ENCODE measurements at regions of chr15 and their contacts with region 1.

Region 1: DNA sequence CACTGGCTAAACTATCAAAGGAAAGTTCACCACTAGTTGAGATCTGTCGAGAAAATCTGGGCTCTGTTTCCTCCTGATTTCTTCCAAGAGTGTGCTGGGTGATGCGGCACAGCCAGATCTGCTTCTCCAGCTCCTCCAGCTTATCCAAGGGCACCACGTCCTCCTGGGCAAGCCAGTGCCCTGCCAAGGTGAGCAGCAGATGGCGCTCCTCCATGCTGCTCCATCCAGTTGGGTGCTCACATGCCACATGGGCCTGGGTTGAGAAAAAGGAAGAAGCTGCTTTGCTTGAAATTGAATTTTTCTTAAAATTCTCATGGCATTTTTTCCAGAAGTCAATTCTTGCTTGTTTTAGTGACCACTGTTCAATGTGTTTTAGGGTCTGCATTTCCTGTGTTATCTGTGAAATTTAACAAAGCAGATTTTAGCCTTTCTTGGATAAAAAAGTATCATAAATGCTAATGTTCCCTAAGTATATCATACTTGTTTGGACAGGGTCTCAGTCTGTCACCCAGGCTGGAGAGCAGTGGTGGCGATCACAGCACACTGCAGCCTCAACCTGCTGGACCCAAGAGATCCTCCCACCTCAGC is 47.3 kb downstream of the EIF3J start:
- DNase-seq: peak; percentile 39 to 54
- H3K4me3 ChIP-seq: no peak overlapping the region
- H3K27ac ChIP-seq: no peak overlapping the region
- H3K4me1 ChIP-seq: peaks cover 11% of the 10 kb centered on the region; the same call in 1 of the 2 replicates
- H3K27me3 ChIP-seq: no peaks in the 10 kb centered on the region
- CTCF ChIP-seq: peak; percentile 51

Region 2: DNA sequence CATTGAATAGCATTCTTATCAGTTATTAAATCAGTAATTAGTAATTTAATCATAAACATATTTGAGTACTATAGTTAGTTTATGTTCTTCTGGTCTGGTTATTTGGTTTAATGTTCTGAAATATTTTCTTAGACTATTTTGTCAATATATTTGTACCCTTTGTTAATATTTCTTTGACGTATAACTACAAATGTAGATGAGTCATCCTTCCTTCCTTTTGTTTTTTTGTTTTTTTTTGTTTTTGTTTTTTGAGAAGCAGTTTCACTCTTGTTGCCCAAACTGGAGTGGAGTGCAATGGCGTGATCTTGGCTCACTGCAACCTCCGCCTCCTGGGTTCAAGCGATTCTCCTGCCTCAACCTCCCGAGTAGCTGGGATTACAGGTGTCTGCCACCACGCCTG is 64.7 kb before region 1 on chr15:
- CTCF ChIA-PET with region 1: no interaction called
- POLR2A ChIA-PET with region 1: no interaction called
- intact Hi-C with region 1: no loop called
- DNase-seq: no peak
- H3K4me3 ChIP-seq: no peak overlapping the region
- H3K27ac ChIP-seq: no peak overlapping the region
- H3K4me1 ChIP-seq: no peaks in the 10 kb centered on the region
- H3K27me3 ChIP-seq: no peaks in the 10 kb centered on the region
- CTCF ChIP-seq: no peak

Region 3: DNA sequence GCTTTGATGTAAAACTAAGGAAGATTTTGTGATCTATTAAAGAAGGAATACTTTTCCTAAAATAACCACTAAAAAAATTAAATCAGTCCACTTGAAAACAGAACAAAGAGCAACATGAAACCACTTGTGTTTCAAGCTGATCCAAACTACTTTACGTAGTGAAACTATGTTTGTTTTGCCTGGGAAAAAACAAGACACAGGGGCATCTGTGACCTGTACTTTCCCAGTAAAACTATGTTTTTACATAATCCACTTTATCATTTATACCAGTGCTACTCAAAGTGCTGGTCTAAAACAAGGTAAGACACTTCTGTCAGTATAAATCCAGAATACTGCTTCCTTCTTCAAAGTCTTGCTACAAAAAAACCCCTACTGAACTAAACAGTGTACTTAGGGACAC is 22.5 kb after region 1 on chr15:
- CTCF ChIA-PET with region 1: interaction called, 13 read pairs
- POLR2A ChIA-PET with region 1: no interaction called
- intact Hi-C with region 1: no loop called
- DNase-seq: no peak
- H3K4me3 ChIP-seq: no peak overlapping the region
- H3K27ac ChIP-seq: no peak overlapping the region
- H3K4me1 ChIP-seq: no peaks in the 10 kb centered on the region
- H3K27me3 ChIP-seq: no peaks in the 10 kb centered on the region
- CTCF ChIP-seq: no peak

Region 4: GRCh38 chr15:44788748-44789147 is 204.5 kb after region 1 on chr15:
- CTCF ChIA-PET with region 1: interaction called, 15 read pairs
- POLR2A ChIA-PET with region 1: no interaction called
- intact Hi-C with region 1: no loop called
- DNase-seq: no peak
- H3K4me3 ChIP-seq: no peak overlapping the region
- H3K27ac ChIP-seq: no peak overlapping the region
- H3K4me1 ChIP-seq: 0 out of 2 replicates have a peak, but pooled peaks cover 4% of the 10 kb centered on the region
- H3K27me3 ChIP-seq: no peaks in the 10 kb centered on the region
- CTCF ChIP-seq: no peak

Region 5: GRCh38 chr15:44918136-44918535 is 333.9 kb after region 1 on chr15:
- CTCF ChIA-PET with region 1: no interaction called
- POLR2A ChIA-PET with region 1: no interaction called
- intact Hi-C with region 1: loop called (anchors 5 kb)
- DNase-seq: no peak
- H3K4me3 ChIP-seq: no peak overlapping the region
- H3K27ac ChIP-seq: no peak overlapping the region
- H3K4me1 ChIP-seq: no peaks in the 10 kb centered on the region
- H3K27me3 ChIP-seq: no peaks in the 10 kb centered on the region
- CTCF ChIP-seq: no peak

Measured in PC-9 (cell line).